ENCODE measurements at regions of chr1 and their contacts with region 1.

Region 1: DNA sequence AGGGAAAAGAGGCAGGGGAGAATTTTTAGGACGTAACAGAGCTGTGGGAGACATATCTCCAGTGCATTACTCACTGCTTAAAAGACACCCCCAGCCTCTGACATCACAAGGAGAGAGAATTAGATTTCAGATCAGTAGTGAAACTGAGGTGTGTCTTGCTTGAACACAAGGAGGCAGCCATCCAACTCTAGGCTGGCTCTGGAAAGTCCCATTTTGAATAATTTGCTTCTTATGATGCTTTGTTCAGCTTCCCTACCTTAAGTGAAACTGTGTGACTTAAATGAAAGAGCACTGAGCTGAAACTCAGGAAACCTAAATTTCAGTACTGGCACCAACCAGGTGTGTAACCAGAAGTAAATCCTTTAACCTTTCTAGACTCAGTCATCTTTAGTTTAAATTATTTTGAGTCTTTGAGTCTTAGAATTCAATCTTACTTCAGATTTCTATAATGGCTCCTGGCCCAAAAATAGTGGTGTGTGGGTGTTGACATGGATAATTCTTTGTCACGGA is 251.6 kb upstream of the SGIP1 start:
- DNase-seq: peak; percentile 73
- H3K4me3 Mint-ChIP-seq: peak overlapping the region; percentile 62
- H3K27ac Mint-ChIP-seq: peak overlapping the region; percentile 88
- H3K4me1 Mint-ChIP-seq: peaks cover 90% of the 10 kb centered on the region
- H3K27me3 Mint-ChIP-seq: no peaks in the 10 kb centered on the region

Region 2: DNA sequence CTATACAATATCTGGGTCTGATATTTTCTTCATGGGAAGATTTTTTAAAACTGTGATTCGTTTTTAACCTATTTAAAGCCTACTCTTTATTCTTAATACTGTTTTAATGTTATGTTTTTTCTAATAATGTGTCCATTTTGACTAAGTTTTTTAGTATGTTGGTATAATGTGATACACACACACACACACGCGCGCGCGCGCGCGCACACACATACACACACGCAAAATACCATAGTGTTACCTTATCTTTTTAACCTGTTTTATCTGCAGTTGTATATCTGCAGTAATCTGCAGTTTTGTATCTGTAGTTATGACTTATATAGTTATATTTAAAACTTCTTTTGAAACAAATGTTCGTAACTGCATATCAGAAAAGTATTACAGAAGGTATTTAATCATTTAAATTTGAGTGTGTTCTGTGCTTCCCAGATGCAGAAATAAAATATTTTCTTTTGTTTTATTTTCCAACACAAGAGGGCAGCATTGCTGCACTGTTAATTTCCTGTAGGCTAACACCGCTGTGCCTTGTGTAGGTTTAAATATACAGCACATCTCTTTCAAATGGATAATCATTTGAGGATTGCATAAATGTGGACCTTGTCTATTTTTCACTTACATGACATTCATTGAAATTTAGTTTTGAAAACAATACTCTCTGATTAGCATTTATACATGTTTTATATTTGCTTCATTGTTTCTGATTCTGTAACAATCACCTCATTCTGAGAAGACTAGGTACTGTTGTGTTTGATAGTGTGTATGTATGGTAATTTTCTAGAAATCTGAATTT is 323.6 kb before region 1 on chr1:
- intact Hi-C with region 1: no loop called
- DNase-seq: peak; percentile 10
- H3K4me3 Mint-ChIP-seq: no peak overlapping the region
- H3K27ac Mint-ChIP-seq: no peak overlapping the region
- H3K4me1 Mint-ChIP-seq: peaks cover 14% of the 10 kb centered on the region
- H3K27me3 Mint-ChIP-seq: peaks cover 2% of the 10 kb centered on the region

Region 3: GRCh38 chr1:66258404-66259105 is 23.8 kb before region 1 on chr1:
- intact Hi-C with region 1: loop called (anchors 1 kb)
- DNase-seq: no peak
- H3K4me3 Mint-ChIP-seq: no peak overlapping the region
- H3K27ac Mint-ChIP-seq: peak overlapping the region; percentile 53
- H3K4me1 Mint-ChIP-seq: peaks cover 83% of the 10 kb centered on the region
- H3K27me3 Mint-ChIP-seq: peaks cover 2% of the 10 kb centered on the region

Region 4: GRCh38 chr1:66294692-66295384 is 12.4 kb after region 1 on chr1:
- intact Hi-C with region 1: loop called (anchors 1 kb)
- DNase-seq: no peak
- H3K4me3 Mint-ChIP-seq: no peak overlapping the region
- H3K27ac Mint-ChIP-seq: peak overlapping the region; percentile 68
- H3K4me1 Mint-ChIP-seq: peaks cover 48% of the 10 kb centered on the region
- H3K27me3 Mint-ChIP-seq: no peaks in the 10 kb centered on the region

Region 5: GRCh38 chr1:66350001-66350547 is 67.7 kb after region 1 on chr1:
- intact Hi-C with region 1: loop called (anchors 1 kb)
- DNase-seq: no peak
- H3K4me3 Mint-ChIP-seq: peak overlapping the region; percentile 75
- H3K27ac Mint-ChIP-seq: peak overlapping the region; percentile 81
- H3K4me1 Mint-ChIP-seq: peaks cover 90% of the 10 kb centered on the region
- H3K27me3 Mint-ChIP-seq: no peaks in the 10 kb centered on the region

Region 6: DNA sequence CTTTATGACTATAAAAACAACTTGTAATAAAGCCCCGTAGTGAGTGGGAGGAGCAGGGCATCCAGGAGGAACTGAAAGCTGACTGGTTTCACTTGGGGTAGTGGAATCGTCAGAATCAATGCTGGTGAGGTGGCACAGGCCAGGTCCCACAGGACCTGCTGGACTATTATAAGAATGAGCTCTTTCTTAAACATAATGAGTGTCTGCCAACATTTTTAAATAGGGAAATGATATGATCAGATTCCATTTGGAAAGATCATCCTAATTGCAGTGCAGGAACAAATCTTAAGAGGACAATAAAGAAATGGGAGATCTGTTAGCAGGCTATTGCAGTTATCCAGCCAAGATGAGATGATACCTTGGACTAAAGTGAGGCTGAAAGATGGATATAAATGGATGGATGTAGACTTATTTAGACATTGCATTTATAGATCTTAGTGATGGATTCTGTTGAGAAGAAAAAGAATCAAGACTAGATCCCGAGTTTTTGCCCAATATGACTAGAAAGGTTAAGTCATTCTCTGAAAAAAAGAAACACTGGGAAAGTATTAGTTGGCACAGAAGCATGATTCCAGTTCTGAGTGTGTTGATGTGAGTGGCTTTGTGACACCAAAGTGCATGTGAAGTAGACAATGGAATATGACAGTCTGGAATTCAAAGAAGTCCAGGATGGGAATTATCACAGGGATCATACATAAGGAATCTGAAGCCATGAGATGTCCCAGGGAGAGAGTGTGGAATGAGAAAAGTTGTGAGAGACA is 98.2 kb after region 1 on chr1:
- intact Hi-C with region 1: no loop called
- DNase-seq: no peak
- H3K4me3 Mint-ChIP-seq: peak overlapping the region; percentile 44
- H3K27ac Mint-ChIP-seq: no peak overlapping the region
- H3K4me1 Mint-ChIP-seq: peaks cover 37% of the 10 kb centered on the region
- H3K27me3 Mint-ChIP-seq: no peaks in the 10 kb centered on the region

Region 7: GRCh38 chr1:66399888-66400529 is 117.6 kb after region 1 on chr1:
- intact Hi-C with region 1: loop called (anchors 1 kb)
- DNase-seq: no peak
- H3K4me3 Mint-ChIP-seq: peak overlapping the region; percentile 67
- H3K27ac Mint-ChIP-seq: peak overlapping the region; percentile 88
- H3K4me1 Mint-ChIP-seq: peaks cover 47% of the 10 kb centered on the region
- H3K27me3 Mint-ChIP-seq: no peaks in the 10 kb centered on the region

Region 8: GRCh38 chr1:66446261-66447001 is 164.0 kb after region 1 on chr1:
- intact Hi-C with region 1: loop called (anchors 1 kb)
- DNase-seq: peak; percentile 39
- H3K4me3 Mint-ChIP-seq: peak overlapping the region; percentile 56
- H3K27ac Mint-ChIP-seq: peak overlapping the region; percentile 95
- H3K4me1 Mint-ChIP-seq: peaks cover 32% of the 10 kb centered on the region
- H3K27me3 Mint-ChIP-seq: peaks cover 3% of the 10 kb centered on the region

Region 9: DNA sequence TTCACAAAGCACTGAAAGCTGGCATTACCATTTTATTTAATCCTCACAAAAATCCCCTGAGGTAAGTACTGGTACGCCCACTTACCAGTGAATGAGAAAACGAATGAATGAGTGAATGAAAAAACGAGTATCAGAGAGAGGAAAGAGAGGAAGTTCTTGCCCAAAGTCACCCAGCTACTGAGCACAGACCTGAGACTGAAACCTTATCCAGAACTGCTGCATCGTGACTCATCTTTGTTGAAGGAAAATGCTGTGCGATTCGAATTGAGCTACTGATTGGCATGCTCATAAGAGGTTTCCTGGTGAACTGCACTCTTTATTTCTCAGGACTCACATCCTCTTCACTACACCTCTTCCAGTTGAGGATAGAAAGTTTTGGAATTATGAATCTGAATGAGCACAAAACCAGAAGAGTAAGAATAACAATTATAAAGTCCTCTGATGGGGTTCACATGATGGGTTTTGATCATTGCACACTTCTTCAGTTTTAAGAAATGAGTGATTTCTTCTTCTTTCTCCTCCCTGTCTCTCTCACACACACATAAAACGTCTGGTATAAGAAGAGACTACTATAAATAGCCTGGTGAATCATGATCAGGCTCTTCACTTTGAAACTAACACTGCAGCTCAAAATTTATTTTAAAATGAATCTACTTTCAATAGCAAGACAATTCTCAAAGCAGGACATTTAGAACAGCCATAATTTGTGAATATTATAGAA is 1057.4 kb after region 1 on chr1:
- intact Hi-C with region 1: loop called (anchors 10 kb)
- DNase-seq: peak; percentile 47
- H3K4me3 Mint-ChIP-seq: peak overlapping the region; percentile 66
- H3K27ac Mint-ChIP-seq: peak overlapping the region; percentile 90
- H3K4me1 Mint-ChIP-seq: peaks cover 80% of the 10 kb centered on the region
- H3K27me3 Mint-ChIP-seq: no peaks in the 10 kb centered on the region